Psoas muscle (tissue), 8 donors: ENCODE measurements at regions of chr11 and their contacts with region 1.

Region 1: GRCh38 chr11:22666688-22667439 is 453 bp downstream of the GAS2 start:
- DNase-seq: peak; percentile 50 to 81
- ATAC-seq: peak; percentile 76 to 85 (median 81)
- H3K4me3 ChIP-seq: peak overlapping the region; percentile 81
- H3K27ac ChIP-seq: peak overlapping the region; percentile 78
- H3K4me1 ChIP-seq: peaks cover 26% of the 10 kb centered on the region
- H3K27me3 ChIP-seq: no peaks in the 10 kb centered on the region
- CTCF ChIP-seq: no peak

Region 2: GRCh38 chr11:22304337-22304961 is 362.4 kb before region 1 on chr11:
- intact Hi-C with region 1: no loop called
- DNase-seq: no peak
- ATAC-seq: peak in 3 of 4 donors; percentile 30 to 67 (median 36)
- H3K4me3 ChIP-seq: no peak overlapping the region
- H3K27ac ChIP-seq: no peak overlapping the region
- H3K4me1 ChIP-seq: no peaks in the 10 kb centered on the region
- H3K27me3 ChIP-seq: peaks cover 0 to 3% (median 0%) of the 10 kb centered on the region in 3 donors
- CTCF ChIP-seq: peak; percentile 61

Region 3: GRCh38 chr11:22625448-22626287 is 41.2 kb before region 1 on chr11 and contains the start of gene FANCF:
- intact Hi-C with region 1: loop called (anchors 1 to 5 kb)
- DNase-seq: peak; percentile 87 to 92
- ATAC-seq: peak; percentile 98 to 99 (median 99)
- H3K4me3 ChIP-seq: peak within 1 kb of the TSS; percentile 89
- H3K27ac ChIP-seq: peak within 1 kb of the TSS; percentile 85
- H3K4me1 ChIP-seq: peaks cover 17% of the 10 kb centered on the region
- H3K27me3 ChIP-seq: no peaks in the 10 kb centered on the region
- CTCF ChIP-seq: no peak
- total RNA-seq, gene FANCF: 1.4 to 2.2 (median 1.7) TPM

Region 4: DNA sequence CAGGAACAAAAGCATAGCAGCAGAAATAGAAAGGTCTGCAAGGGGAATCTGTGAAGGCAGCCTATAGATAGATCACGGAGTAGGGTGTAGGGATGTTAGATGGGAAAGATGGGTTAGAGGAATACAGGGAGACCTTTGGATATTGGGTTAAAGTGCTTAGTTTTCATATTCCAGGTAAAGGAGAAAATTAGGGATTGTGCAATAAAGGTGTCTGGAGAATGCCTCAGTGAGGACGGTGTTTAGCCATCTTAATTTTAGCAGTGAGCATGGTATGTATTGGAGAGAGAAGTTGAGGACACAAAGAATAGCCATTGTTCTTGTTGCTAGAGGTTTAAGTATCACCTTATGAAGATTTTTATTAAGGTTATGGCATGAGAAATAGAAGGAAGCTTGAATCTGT is 17.2 kb after region 1 on chr11:
- intact Hi-C with region 1: loop called in 1 of 2 experiments (anchors 1 kb)
- DNase-seq: no peak
- ATAC-seq: no peak
- H3K4me3 ChIP-seq: no peak overlapping the region
- H3K27ac ChIP-seq: no peak overlapping the region
- H3K4me1 ChIP-seq: peaks cover 13% of the 10 kb centered on the region
- H3K27me3 ChIP-seq: no peaks in the 10 kb centered on the region
- CTCF ChIP-seq: no peak

Region 5: GRCh38 chr11:22730319-22730718 is 63.5 kb after region 1 on chr11:
- intact Hi-C with region 1: loop called in 1 of 2 experiments (anchors 5 kb)
- DNase-seq: no peak
- ATAC-seq: peak in 2 of 4 donors; percentile 58 to 60
- H3K4me3 ChIP-seq: no peak overlapping the region
- H3K27ac ChIP-seq: no peak overlapping the region
- H3K4me1 ChIP-seq: peaks cover 18% of the 10 kb centered on the region
- H3K27me3 ChIP-seq: no peaks in the 10 kb centered on the region
- CTCF ChIP-seq: peak; percentile 52

Region 6: GRCh38 chr11:22787551-22788162 is 120.8 kb after region 1 on chr11:
- intact Hi-C with region 1: loop called (anchors 5 kb)
- DNase-seq: no peak
- ATAC-seq: peak in 3 of 4 donors; percentile 49 to 80 (median 69)
- H3K4me3 ChIP-seq: no peak overlapping the region
- H3K27ac ChIP-seq: no peak overlapping the region
- H3K4me1 ChIP-seq: no peaks in the 10 kb centered on the region
- H3K27me3 ChIP-seq: no peaks in the 10 kb centered on the region
- CTCF ChIP-seq: peak; percentile 72